Activated CD8-positive, alpha-beta T cell treated with anti-CD3 and anti-CD28 coated beads for 36 hours (primary cell): ENCODE measurements at regions of chr4 and their contacts with region 1.

Region 1: GRCh38 chr4:154618708-154619315 is 6.4 kb upstream of the FGG start:
- DNase-seq: peak; percentile 86
- ATAC-seq: peak; percentile 81
- H3K4me3 Mint-ChIP-seq: no peak overlapping the region
- H3K27ac Mint-ChIP-seq: no peak overlapping the region
- H3K4me1 Mint-ChIP-seq: peaks cover 7% of the 10 kb centered on the region
- H3K27me3 Mint-ChIP-seq: peaks cover 4% of the 10 kb centered on the region
- CTCF ChIP-seq: peak; percentile 56

Region 2: DNA sequence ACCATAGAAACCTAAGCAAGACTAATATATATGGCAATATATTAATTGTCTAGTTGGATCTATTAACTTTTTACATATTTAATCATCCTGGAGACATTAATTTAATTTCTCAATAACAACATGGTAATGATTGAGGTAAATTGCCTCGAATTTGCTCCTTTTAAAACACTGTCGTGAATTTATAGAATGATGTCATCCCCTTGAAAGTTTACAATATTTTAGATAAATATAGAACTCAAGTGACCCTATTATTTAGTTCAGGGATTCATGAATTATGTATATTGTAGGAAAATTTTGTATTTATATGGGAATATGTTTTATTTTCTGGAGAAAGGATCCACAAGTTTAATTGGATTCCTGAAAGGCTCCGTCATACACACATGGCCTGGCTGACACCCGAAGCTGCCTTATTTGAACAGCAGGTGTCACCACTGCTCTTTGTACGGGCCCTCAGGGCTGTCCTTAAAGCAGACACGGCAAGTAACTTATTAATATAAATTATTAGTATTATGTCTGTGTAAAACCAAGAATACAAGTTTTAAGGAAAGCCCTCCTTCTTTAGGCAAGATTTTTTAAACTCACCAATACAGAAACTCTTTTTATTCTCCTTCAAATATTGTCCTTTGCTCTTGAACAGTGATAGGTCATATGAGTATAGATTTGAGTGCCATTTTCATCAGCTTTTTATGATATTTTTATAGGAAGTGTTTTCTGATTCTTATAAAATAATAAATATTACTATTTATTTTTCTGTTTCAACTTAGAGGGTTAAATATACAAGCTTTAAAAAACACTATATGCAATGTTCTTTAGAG is 66.7 kb before region 1 on chr4:
- CTCF ChIA-PET with region 1: interaction called, 209 read pairs
- POLR2A ChIA-PET with region 1: interaction called, 4 read pairs
- intact Hi-C with region 1: loop called (anchors 2 kb)
- DNase-seq: peak; percentile 81
- ATAC-seq: peak; percentile 50
- H3K4me3 Mint-ChIP-seq: no peak overlapping the region
- H3K27ac Mint-ChIP-seq: no peak overlapping the region
- H3K4me1 Mint-ChIP-seq: peaks cover 17% of the 10 kb centered on the region
- H3K27me3 Mint-ChIP-seq: peaks cover 1% of the 10 kb centered on the region
- CTCF ChIP-seq: peak; percentile 86

Region 3: GRCh38 chr4:154559494-154560418 is 59.1 kb before region 1 on chr4:
- CTCF ChIA-PET with region 1: interaction called, 141 read pairs
- POLR2A ChIA-PET with region 1: no interaction called
- intact Hi-C with region 1: loop called (anchors 2 kb)
- DNase-seq: peak; percentile 6
- ATAC-seq: peak; percentile 56
- H3K4me3 Mint-ChIP-seq: no peak overlapping the region
- H3K27ac Mint-ChIP-seq: no peak overlapping the region
- H3K4me1 Mint-ChIP-seq: no peaks in the 10 kb centered on the region
- H3K27me3 Mint-ChIP-seq: peaks cover 3% of the 10 kb centered on the region
- CTCF ChIP-seq: peak; percentile 60

Region 4: DNA sequence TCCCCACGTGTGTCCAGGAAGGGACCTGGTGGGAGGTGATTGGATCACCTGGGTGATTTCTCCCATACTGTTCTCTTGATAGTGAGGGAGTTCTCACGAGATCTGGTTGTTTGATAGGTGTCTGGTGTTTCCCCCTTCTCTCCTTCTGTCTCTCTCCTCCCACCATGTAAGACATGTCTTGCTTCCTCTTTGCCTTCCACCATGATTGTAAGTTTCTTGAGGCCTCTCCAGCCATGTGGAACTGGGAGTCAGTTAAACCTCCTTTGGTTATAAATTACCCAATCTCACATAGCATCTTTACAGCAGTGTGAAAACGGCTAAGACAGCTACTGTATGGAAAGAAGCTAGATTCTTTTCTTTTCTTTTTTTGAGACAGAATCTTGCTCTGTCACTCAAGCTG is 15.2 kb after region 1 on chr4:
- CTCF ChIA-PET with region 1: interaction called, 10 read pairs
- POLR2A ChIA-PET with region 1: no interaction called
- intact Hi-C with region 1: no loop called
- DNase-seq: no peak
- ATAC-seq: no peak
- H3K4me3 Mint-ChIP-seq: no peak overlapping the region
- H3K27ac Mint-ChIP-seq: no peak overlapping the region
- H3K4me1 Mint-ChIP-seq: no peaks in the 10 kb centered on the region
- H3K27me3 Mint-ChIP-seq: peaks cover 25% of the 10 kb centered on the region
- CTCF ChIP-seq: no peak

Region 5: DNA sequence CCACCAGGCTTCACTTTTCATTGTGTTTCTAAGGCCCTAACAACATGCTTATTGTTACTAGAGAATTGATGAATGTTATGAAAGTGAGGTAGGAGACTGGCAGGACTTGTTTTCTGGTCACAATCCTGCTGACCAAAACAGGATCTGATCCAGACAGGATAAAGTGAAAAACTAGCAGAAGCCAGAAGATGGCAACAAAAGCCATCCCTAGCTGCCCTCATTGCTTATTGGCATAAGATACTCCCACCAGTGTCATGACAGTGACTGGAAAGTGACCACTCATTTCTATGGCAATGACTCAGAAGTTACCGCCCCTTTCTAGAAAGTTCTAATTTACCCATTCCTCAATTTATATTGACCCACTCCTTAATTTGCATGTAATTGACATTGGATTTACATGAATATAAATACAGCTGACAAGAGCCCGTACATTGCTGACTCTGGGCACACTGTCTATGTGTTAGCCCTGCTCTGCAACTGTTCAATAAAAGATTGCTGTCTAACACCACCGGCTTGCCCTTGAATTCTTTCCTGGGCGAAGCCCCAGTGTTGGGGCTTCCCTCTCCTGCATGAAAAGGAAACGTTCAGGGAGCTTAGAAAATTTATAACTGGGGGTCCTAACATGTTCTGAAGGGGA is 23.7 kb after region 1 on chr4:
- CTCF ChIA-PET with region 1: interaction called, 10 read pairs
- POLR2A ChIA-PET with region 1: no interaction called
- intact Hi-C with region 1: no loop called
- DNase-seq: no peak
- ATAC-seq: no peak
- H3K4me3 Mint-ChIP-seq: no peak overlapping the region
- H3K27ac Mint-ChIP-seq: no peak overlapping the region
- H3K4me1 Mint-ChIP-seq: no peaks in the 10 kb centered on the region
- H3K27me3 Mint-ChIP-seq: peaks cover 11% of the 10 kb centered on the region
- CTCF ChIP-seq: no peak

Region 6: GRCh38 chr4:154691229-154691628 is 72.4 kb after region 1 on chr4:
- CTCF ChIA-PET with region 1: no interaction called
- POLR2A ChIA-PET with region 1: no interaction called
- intact Hi-C with region 1: no loop called
- DNase-seq: no peak
- ATAC-seq: no peak
- H3K4me3 Mint-ChIP-seq: no peak overlapping the region
- H3K27ac Mint-ChIP-seq: no peak overlapping the region
- H3K4me1 Mint-ChIP-seq: no peaks in the 10 kb centered on the region
- H3K27me3 Mint-ChIP-seq: peaks cover 15% of the 10 kb centered on the region
- CTCF ChIP-seq: no peak